ENCODE measurements at regions of chr11 and their contacts with region 1.

Region 1: DNA sequence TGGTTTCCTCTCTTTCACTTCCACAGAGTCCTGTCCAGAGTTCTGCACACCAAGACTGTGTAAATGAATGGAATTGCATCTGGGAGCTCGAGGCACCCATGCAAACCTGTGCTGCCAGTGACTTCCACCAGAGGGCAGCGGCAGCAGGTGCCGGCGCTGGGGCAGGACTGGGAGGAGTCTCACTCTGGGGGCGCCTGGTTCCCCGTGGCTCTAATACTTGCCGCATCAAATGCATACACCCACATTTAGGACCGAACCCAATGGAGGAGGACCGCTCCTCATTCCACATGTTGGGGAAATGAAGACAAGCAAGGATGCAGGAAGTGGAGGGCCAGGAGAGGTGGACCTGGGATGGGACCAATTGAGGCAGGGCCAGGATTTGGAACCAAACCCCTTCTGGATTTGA is 1.1 kb upstream of the CD6 start:
- DNase-seq: peak; percentile 94
- H3K4me3 ChIP-seq: peak overlapping the region in 1 of 8 donors; percentile 68
- H3K27ac ChIP-seq: peak overlapping the region in 3 of 8 donors; percentile 77 to 87 (median 80)
- H3K4me1 ChIP-seq: peaks cover 9 to 33% (median 17%) of the 10 kb centered on the region in 6 donors
- H3K27me3 ChIP-seq: no peaks in the 10 kb centered on the region
- CTCF ChIP-seq: peak; percentile 81 to 94 (median 92)
- POLR2A ChIP-seq: no peak

Region 2: GRCh38 chr11:60762851-60763691 is 207.3 kb before region 1 on chr11:
- intact Hi-C with region 1: no loop called
- DNase-seq: peak; percentile 47
- H3K4me3 ChIP-seq: no peak overlapping the region
- H3K27ac ChIP-seq: no peak overlapping the region
- H3K4me1 ChIP-seq: peaks cover 0 to 36% (median 2%) of the 10 kb centered on the region in 6 donors
- H3K27me3 ChIP-seq: peaks cover 0 to 57% (median 15%) of the 10 kb centered on the region in 7 donors
- CTCF ChIP-seq: peak in 1 of 11 experiments; percentile 13
- POLR2A ChIP-seq: no peak

Region 3: GRCh38 chr11:61129639-61130523 is 159.5 kb after region 1 on chr11:
- intact Hi-C with region 1: loop called (anchors 2 kb)
- DNase-seq: peak; percentile 98
- H3K4me3 ChIP-seq: peak overlapping the region in 2 of 8 donors; percentile 15 to 41
- H3K27ac ChIP-seq: peak overlapping the region in 7 of 8 donors; percentile 24 to 68 (median 60)
- H3K4me1 ChIP-seq: peaks cover 6 to 31% (median 14%) of the 10 kb centered on the region in 6 donors
- H3K27me3 ChIP-seq: no peaks in the 10 kb centered on the region
- CTCF ChIP-seq: peak; percentile 99 to 100 (median 100)
- POLR2A ChIP-seq: no peak

Measured in spleen (tissue), 13 donors.